A673 (cell line): ENCODE measurements at regions of chr5 and their contacts with region 1.

Region 1: GRCh38 chr5:66306105-66306843 is 162.2 kb downstream of the SREK1 start:
- DNase-seq: peak; percentile 78
- H3K4me3 ChIP-seq: no peak overlapping the region
- H3K27ac ChIP-seq: no peak overlapping the region
- H3K4me1 ChIP-seq: no peaks in the 10 kb centered on the region
- H3K27me3 ChIP-seq: peaks cover 4% of the 10 kb centered on the region
- CTCF ChIP-seq: peak; percentile 90

Region 2: DNA sequence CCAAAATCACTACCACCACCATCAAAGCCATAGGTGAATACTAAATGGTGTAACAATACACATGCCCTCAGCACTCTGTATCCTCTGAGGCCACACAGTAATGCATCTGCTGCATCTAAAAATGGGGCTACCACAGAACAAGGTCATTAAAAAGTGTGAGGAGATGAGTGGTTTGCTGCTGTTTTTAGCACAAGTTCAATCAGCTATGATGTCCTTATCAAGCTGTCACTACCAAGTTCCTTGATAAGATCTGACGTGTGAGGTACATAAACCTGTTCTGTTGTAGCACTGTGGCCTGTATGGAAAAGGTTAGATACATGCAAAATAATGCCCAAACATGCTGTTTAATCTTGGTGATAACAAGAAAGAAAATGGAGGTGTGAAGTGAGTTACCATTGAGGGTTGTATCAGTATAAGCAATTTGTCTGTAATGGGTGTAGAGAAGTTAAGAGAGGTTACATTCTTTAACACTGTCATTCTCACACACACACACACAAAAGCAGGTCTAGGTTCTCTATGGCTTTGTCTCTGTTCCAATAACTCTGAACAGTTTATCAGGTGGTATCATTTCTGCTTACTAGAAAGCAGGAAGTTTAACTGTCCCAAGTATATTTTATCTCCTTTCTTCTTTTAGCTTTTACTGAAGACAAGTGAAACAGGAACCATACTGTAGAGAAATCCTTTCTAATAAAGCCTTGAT is 1284.6 kb before region 1 on chr5:
- CTCF ChIA-PET with region 1: no interaction called
- POLR2A ChIA-PET with region 1: no interaction called
- intact Hi-C with region 1: no loop called
- DNase-seq: no peak
- H3K4me3 ChIP-seq: no peak overlapping the region
- H3K27ac ChIP-seq: no peak overlapping the region
- H3K4me1 ChIP-seq: no peaks in the 10 kb centered on the region
- H3K27me3 ChIP-seq: no peaks in the 10 kb centered on the region
- CTCF ChIP-seq: no peak

Region 3: DNA sequence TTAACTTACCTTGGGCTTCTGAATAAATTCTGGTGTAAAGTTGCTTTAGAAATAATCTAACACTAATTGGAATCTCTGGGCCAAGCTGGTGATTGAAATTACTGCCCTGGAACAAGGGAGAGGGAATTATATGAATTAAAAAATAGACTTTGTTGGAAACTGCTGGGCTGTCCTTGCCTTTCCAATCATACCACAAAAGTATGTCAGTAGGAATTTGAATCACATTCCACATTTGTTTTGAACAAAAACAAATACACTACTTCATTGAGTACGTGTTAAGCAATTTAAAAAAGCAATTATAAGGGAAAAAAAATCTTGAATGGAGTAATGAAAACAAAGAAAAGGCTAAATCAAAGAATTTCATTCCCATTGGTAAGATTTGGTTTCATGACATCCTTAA is 264.6 kb before region 1 on chr5:
- CTCF ChIA-PET with region 1: no interaction called
- POLR2A ChIA-PET with region 1: no interaction called
- intact Hi-C with region 1: no loop called
- DNase-seq: no peak
- H3K4me3 ChIP-seq: no peak overlapping the region
- H3K27ac ChIP-seq: no peak overlapping the region
- H3K4me1 ChIP-seq: peaks cover 9% of the 10 kb centered on the region
- H3K27me3 ChIP-seq: no peaks in the 10 kb centered on the region
- CTCF ChIP-seq: no peak

Region 4: DNA sequence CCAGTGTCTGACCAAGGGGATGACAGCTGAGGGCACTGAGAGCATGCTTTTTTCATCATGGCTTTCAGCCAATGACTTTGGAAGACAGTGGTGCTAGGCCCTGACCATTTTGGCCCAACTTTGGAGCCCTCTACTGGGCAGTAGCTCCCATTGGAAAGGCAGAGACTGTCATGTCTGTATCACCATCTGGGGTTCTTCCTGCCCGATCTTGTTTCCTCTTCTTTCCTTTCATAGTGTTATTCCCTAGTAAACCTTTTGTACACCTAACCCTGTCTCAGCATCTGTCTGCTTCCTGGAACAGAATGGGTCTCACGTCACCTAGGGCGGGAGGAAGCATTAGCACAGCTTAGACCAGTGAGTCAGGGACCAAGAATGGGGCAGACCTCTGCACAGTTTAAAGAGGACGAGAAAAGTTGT is 192.5 kb after region 1 on chr5:
- CTCF ChIA-PET with region 1: no interaction called
- POLR2A ChIA-PET with region 1: no interaction called
- intact Hi-C with region 1: loop called (anchors 5 kb)
- DNase-seq: peak; percentile 2
- H3K4me3 ChIP-seq: no peak overlapping the region
- H3K27ac ChIP-seq: no peak overlapping the region
- H3K4me1 ChIP-seq: no peaks in the 10 kb centered on the region
- H3K27me3 ChIP-seq: no peaks in the 10 kb centered on the region
- CTCF ChIP-seq: peak; percentile 27; the same call in 1 of the 2 replicates

Region 5: DNA sequence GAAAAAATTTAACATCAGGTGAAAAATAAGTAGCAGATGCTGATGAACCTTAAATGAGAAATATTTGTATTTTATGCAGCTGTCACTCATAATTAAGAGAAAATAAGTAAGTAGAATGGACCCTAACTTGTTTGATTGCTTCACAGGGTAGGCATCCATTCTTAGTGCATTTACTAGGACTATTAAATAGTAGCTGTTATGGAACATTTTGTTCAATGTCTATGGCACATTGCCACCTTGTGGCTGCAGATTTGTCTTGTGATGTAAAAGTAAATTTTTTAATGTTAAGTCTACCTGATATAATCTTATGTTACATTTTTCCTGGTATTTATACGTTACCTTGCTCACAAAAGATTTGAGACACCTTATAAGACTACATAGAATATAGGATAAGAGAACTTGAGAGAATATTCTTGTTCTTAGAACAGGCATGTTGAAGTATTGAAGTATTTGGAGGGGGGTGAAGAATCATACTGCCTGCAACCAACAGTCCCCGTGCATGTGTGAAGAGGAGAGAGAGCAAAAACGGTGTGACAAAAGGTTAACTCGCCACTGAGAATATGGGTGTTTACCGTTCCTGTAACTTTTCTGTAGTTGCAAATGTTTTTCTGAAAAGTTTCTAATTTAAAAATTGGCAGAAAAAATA is 451.0 kb after region 1 on chr5:
- CTCF ChIA-PET with region 1: interaction called, 25 read pairs
- POLR2A ChIA-PET with region 1: no interaction called
- intact Hi-C with region 1: loop called (anchors 1 kb)
- DNase-seq: peak; percentile 59
- H3K4me3 ChIP-seq: no peak overlapping the region
- H3K27ac ChIP-seq: no peak overlapping the region
- H3K4me1 ChIP-seq: no peaks in the 10 kb centered on the region
- H3K27me3 ChIP-seq: peaks cover 10% of the 10 kb centered on the region
- CTCF ChIP-seq: peak; percentile 63

Region 6: DNA sequence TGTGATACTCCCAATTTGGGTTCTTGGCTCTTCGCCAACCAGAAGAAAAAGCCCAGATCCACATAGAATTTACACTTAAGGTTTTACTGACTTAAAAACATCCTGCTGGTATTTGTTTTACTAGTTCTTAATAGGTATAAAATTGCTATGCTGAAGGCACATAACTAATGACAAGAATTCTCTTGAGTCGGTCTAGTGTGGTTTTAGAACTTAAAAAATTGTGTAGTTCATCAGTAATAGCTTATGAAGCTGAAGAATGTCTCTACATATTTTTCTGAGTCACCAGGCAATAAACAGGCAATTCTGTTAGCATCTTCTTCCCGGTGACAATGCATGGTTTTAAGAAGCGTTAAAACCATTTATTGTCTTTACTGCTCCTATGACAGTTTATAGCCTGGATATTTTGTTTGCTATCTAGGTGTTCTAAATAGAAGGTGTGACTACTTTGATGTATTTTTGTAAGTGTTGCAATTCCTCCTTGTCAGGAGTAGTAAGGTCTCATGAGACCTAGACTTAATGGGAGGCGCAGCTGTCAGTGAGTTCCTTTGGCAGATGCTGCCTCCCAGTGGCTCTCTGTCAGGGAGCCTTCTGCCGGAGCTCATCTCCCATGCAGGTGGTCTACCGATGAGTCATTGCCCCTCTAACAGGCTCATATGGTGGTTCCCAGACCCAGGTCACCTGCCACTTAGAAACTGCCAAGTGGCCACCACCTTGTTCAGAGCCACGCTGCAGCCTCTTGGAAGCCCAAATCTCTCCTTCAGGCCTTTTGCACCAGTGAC is 463.8 kb after region 1 on chr5:
- CTCF ChIA-PET with region 1: interaction called, 12 read pairs
- POLR2A ChIA-PET with region 1: no interaction called
- intact Hi-C with region 1: loop called (anchors 5 kb)
- DNase-seq: peak; percentile 48
- H3K4me3 ChIP-seq: no peak overlapping the region
- H3K27ac ChIP-seq: no peak overlapping the region
- H3K4me1 ChIP-seq: no peaks in the 10 kb centered on the region
- H3K27me3 ChIP-seq: no peaks in the 10 kb centered on the region
- CTCF ChIP-seq: peak; percentile 57